SK-N-SH (cell line): ENCODE measurements at regions of chr12 and their contacts with region 1.

Region 1: DNA sequence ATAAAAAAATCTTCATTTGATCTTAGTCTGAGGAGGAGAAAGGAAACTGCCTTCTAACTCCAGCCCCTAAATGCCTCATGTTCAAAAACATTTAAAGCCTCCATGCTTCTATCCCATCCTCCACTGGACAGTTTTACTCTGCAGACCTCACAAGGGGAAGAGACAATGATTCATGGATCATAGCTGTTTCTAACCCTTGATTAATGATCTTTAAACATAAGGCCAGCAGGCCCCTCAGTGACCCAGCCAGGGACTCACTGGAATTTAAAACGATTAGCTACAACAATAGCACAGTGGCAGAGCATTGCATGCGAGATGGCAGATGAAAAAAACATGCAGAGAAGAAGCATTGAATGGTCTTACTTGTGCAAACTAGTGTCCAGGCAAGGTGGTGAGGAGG is 6.0 kb downstream of the DCTN2 start:
- DNase-seq: no peak
- H3K4me3 ChIP-seq: no peak overlapping the region
- H3K27ac ChIP-seq: peak overlapping the region in 1 of 2 experiments; percentile 2; a peak in 1 of 4 replicates
- H3K4me1 ChIP-seq: peaks cover 7 to 13% of the 10 kb centered on the region in 2 experiments; a peak in 3 of 4 replicates
- H3K27me3 ChIP-seq: no peaks in the 10 kb centered on the region
- CTCF ChIP-seq: no peak
- EP300 ChIP-seq: no peak
- RAD21 ChIP-seq: no peak

Region 2: DNA sequence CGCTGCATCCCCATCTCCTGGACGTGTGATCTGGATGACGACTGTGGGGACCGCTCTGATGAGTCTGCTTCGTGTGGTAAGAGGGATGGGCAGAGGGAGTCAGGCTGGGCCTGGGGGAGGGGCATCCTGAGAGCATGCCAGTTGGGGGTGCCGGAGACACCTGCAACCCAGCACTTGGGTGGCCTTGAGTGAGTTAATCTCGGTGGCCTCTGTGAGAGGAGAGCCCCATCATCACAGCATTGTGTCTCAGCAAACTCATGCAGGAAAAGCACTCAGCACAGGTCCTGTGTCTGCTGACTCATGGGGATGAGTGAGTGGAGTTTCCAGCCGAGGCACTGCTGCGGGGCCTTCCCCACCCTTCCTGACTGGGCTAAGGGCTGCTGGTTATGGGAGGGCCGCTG is 374.0 kb before region 1 on chr12:
- CTCF ChIA-PET with region 1: no interaction called
- POLR2A ChIA-PET with region 1: no interaction called
- DNase-seq: no peak
- H3K4me3 ChIP-seq: no peak overlapping the region
- H3K27ac ChIP-seq: no peak overlapping the region
- H3K4me1 ChIP-seq: peaks cover 0 to 3% of the 10 kb centered on the region in 2 experiments; a peak in 1 of 4 replicates
- H3K27me3 ChIP-seq: no peaks in the 10 kb centered on the region
- CTCF ChIP-seq: no peak
- EP300 ChIP-seq: no peak
- RAD21 ChIP-seq: no peak

Region 3: GRCh38 chr12:57529816-57530215 is 11.2 kb before region 1 on chr12:
- CTCF ChIA-PET with region 1: interaction called, 7 read pairs
- POLR2A ChIA-PET with region 1: interaction called, 10 read pairs
- DNase-seq: no peak
- H3K4me3 ChIP-seq: no peak overlapping the region
- H3K27ac ChIP-seq: no peak overlapping the region
- H3K4me1 ChIP-seq: peaks cover 0 to 3% of the 10 kb centered on the region in 2 experiments; a peak in 1 of 4 replicates
- H3K27me3 ChIP-seq: no peaks in the 10 kb centered on the region
- CTCF ChIP-seq: no peak
- EP300 ChIP-seq: no peak
- RAD21 ChIP-seq: no peak

Region 4: DNA sequence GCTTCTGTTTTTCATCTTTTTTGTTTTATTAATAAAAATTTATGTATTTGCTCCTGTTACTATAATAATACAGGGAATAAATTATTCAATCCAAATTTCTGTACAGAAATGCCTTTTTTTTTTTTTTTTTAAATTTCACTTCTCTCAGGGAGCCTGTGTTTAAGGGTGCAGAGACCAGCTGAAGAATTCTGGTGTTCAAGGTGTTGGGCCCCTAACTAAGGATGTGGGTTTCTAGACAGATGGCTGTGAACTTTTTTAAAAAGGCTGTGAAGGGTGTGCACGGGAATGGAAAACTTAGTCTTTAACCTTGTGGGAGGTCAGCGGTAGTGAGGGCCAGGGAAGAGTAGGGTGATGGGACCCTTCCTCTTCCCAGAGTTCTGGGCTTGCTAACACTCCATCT is 62.3 kb after region 1 on chr12:
- CTCF ChIA-PET with region 1: no interaction called
- POLR2A ChIA-PET with region 1: no interaction called
- DNase-seq: no peak
- H3K4me3 ChIP-seq: no peak overlapping the region
- H3K27ac ChIP-seq: peak overlapping the region; percentile 47 to 97; a peak in 3 of 4 replicates
- H3K4me1 ChIP-seq: peaks cover 9 to 17% of the 10 kb centered on the region in 2 experiments; a peak in 3 of 4 replicates
- H3K27me3 ChIP-seq: no peaks in the 10 kb centered on the region
- CTCF ChIP-seq: no peak
- EP300 ChIP-seq: no peak
- RAD21 ChIP-seq: no peak